Heart right ventricle (tissue), 16 donors: ENCODE measurements at regions of chr1 and their contacts with region 1.

Region 1: DNA sequence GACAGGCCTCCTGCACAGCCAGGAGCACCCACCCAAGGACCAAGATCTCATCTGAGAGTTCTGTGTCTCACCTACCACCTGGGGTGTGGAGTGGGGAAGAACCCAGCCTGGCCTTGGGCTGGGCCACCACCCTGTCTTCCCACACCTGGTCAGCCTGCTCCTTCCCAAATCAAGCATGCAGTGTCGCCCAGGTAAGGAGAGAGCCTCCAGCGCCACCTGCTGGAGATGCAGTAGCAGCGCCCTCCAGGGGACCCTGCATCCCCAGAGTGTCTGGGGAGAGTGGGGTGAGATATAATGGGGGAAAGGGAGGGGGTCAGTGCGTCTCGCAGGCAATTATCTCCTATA is 32.3 kb downstream of the KIAA2013 start:
- DNase-seq: peak; percentile 64 to 76
- ATAC-seq: peak; percentile 82 to 94 (median 90)
- H3K4me3 ChIP-seq: no peak overlapping the region
- H3K27ac ChIP-seq: no peak overlapping the region
- H3K4me1 ChIP-seq: peaks cover 0 to 9% (median 0%) of the 10 kb centered on the region in 9 donors
- H3K27me3 ChIP-seq: peaks cover 10 to 41% (median 36%) of the 10 kb centered on the region in 7 donors
- CTCF ChIP-seq: peak; percentile 86 to 93 (median 90)

Region 2: GRCh38 chr1:12031039-12031980 is 137.4 kb after region 1 on chr1:
- intact Hi-C with region 1: loop called in 1 of 10 experiments (anchors 10 kb)
- DNase-seq: peak in 1 of 2 donors; percentile 54
- ATAC-seq: peak; percentile 35 to 75 (median 72)
- H3K4me3 ChIP-seq: no peak overlapping the region
- H3K27ac ChIP-seq: no peak overlapping the region
- H3K4me1 ChIP-seq: peaks cover 0 to 17% (median 0%) of the 10 kb centered on the region in 9 donors
- H3K27me3 ChIP-seq: no peaks in the 10 kb centered on the region
- CTCF ChIP-seq: peak; percentile 36 to 68 (median 61)

Region 3: GRCh38 chr1:12356004-12356890 is 462.4 kb after region 1 on chr1:
- intact Hi-C with region 1: no loop called
- DNase-seq: no peak
- ATAC-seq: peak in 3 of 8 donors; percentile 31 to 72 (median 57)
- H3K4me3 ChIP-seq: no peak overlapping the region
- H3K27ac ChIP-seq: peak overlapping the region in 6 of 10 donors; percentile 17 to 39 (median 30)
- H3K4me1 ChIP-seq: peaks cover 0 to 38% (median 16%) of the 10 kb centered on the region in 9 donors
- H3K27me3 ChIP-seq: no peaks in the 10 kb centered on the region
- CTCF ChIP-seq: no peak